Activated CD4-positive, alpha-beta memory T cell treated with anti-CD3 and anti-CD28 coated beads, Interleukin-2, amount 10 ng/mL, durations not matched to agents 7 days and 5 days (primary cell): ENCODE measurements at regions of chr14 and their contacts with region 1.

Region 1: DNA sequence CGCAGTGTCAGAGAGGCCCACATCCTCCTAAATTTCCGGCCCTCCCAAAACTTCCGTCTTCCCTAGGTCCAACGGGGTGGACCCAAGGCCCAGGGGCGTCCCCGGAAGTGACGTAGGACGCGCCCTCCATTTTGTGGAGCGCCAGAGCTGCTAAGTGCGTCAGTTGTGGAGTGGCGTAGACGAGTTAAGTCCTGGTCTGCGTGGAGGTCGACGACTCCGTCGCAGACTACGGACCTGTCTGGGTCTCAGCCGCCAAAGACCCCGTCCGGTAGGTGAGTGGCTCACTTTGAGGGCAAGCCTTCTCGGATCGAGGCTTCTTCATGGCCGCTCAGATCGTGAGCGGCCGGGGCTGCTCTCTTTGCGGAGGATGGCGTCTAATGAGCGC is at the start of gene SRSF5:
- DNase-seq: peak; percentile 95
- H3K4me3 Mint-ChIP-seq: peak within 1 kb of the TSS; percentile 93
- H3K27ac Mint-ChIP-seq: peak within 1 kb of the TSS; percentile 100
- H3K4me1 Mint-ChIP-seq: peaks cover 62% of the 10 kb centered on the region
- H3K27me3 Mint-ChIP-seq: no peaks in the 10 kb centered on the region
- total RNA-seq, gene SRSF5: 368 to 376 TPM

Region 2: DNA sequence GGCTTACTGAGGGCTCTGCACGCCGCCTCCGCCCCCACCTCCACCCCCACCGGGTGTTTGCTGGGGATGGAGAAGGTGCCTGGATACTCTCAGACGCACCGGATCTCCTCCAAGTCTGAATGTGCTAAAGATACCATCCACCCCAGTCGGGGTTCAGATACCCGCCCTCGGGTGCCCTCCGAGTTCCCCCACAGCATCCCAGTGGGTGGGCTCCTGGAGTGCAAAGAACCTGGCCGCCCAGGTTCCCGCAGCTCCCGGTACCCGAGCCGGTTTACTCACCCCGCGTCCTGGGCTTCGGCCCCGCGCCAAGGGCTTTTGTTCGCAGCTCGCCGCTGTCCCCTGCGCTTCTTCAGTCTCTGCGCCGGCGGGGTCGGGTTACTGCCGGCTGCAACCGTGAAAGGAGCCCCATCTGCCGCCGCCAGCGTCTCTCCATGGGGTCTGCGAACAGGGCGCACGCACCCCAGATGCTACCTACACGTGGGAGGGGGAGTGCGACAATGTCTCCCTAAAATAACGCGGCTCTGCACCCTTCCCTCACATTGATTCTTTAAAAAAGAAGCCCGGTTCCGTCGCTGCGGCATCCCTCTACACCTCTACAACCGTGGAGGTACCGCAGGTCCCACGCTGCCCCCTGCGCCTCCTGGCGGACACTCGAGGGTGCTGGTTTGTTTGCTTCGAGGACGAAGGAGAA is 192.6 kb before region 1 on chr14 and contains the start of gene CCDC177:
- CTCF ChIA-PET with region 1: no interaction called
- POLR2A ChIA-PET with region 1: interaction called, 11 read pairs
- DNase-seq: peak; percentile 77
- H3K4me3 Mint-ChIP-seq: peak within 1 kb of the TSS; percentile 62
- H3K27ac Mint-ChIP-seq: no peak within 1 kb of the TSS
- H3K4me1 Mint-ChIP-seq: peaks cover 10% of the 10 kb centered on the region
- H3K27me3 Mint-ChIP-seq: peaks cover 64% of the 10 kb centered on the region
- total RNA-seq, gene CCDC177: not detected

Region 3: GRCh38 chr14:69673578-69674305 is 93.2 kb before region 1 on chr14:
- CTCF ChIA-PET with region 1: no interaction called
- POLR2A ChIA-PET with region 1: interaction called, 13 read pairs
- DNase-seq: no peak
- H3K4me3 Mint-ChIP-seq: peak overlapping the region; percentile 31
- H3K27ac Mint-ChIP-seq: peak overlapping the region; percentile 95
- H3K4me1 Mint-ChIP-seq: peaks cover 89% of the 10 kb centered on the region
- H3K27me3 Mint-ChIP-seq: no peaks in the 10 kb centered on the region

Region 4: GRCh38 chr14:69695322-69696203 is 71.4 kb before region 1 on chr14:
- CTCF ChIA-PET with region 1: no interaction called
- POLR2A ChIA-PET with region 1: no interaction called
- DNase-seq: no peak
- H3K4me3 Mint-ChIP-seq: no peak overlapping the region
- H3K27ac Mint-ChIP-seq: peak overlapping the region; percentile 56
- H3K4me1 Mint-ChIP-seq: peaks cover 76% of the 10 kb centered on the region
- H3K27me3 Mint-ChIP-seq: no peaks in the 10 kb centered on the region

Region 5: DNA sequence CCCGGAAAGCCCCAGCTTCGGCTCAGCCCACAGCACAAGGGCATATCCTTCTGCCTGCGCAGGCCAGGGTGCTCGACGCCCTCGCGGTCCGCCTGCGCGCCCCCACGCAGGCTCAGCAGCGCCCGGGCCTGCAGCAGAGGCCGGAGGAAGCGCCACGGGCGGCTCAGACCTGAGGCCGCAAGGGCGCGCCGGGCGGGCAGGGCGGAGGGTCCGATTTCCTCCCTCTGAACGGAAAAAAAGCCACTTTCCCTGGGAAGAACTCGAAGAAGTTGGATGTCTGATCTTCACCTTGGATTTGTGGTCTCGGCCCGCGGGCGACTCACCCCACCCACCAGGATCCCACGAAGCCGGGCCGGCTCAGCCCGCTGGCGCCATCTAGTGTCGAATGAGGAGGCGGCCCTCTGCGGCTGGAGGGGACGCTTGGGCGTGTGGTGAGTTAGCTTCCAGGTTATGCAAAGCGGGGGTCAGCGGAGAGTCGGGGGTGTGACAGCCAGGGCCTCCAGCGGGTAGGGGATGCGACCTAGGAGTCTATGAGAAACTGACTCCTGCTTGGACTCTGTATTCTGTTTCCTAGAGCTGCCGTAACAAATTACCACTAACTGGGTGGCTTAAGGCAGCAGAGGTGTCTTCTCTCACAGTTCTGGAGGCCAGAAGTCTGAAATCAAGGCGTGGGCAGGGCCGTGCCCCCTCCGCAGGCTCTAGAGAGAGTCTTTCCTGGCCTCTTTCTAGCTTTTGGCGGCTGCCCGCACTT is 40.0 kb before region 1 on chr14:
- CTCF ChIA-PET with region 1: interaction called, 6 read pairs
- POLR2A ChIA-PET with region 1: interaction called, 21 read pairs
- DNase-seq: peak; percentile 84
- H3K4me3 Mint-ChIP-seq: peak overlapping the region; percentile 66
- H3K27ac Mint-ChIP-seq: peak overlapping the region; percentile 22
- H3K4me1 Mint-ChIP-seq: peaks cover 46% of the 10 kb centered on the region
- H3K27me3 Mint-ChIP-seq: no peaks in the 10 kb centered on the region

Region 6: GRCh38 chr14:69755784-69756183 is 11.2 kb before region 1 on chr14:
- CTCF ChIA-PET with region 1: interaction called, 3 read pairs
- POLR2A ChIA-PET with region 1: interaction called, 24 read pairs
- DNase-seq: no peak
- H3K4me3 Mint-ChIP-seq: no peak overlapping the region
- H3K27ac Mint-ChIP-seq: no peak overlapping the region
- H3K4me1 Mint-ChIP-seq: peaks cover 13% of the 10 kb centered on the region
- H3K27me3 Mint-ChIP-seq: no peaks in the 10 kb centered on the region

Region 7: DNA sequence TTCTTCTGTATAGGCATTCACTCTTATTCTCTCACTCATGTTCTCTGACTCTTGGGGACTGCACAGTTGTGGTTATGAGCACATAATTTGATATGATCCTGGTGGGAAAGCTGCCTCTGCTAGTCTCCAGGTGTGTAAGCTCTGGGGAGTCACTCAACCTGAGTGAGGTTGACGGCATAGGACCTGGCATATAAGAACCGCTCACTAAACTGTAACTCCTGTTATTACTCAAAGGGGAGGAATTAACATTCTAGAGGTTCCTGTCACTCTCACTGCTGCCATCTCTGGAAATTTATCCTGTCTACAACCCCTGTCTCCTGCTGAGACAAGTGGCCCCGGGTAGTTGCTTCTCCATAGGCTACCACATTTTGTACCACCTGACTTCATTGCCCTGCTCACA is 14.0 kb after region 1 on chr14:
- CTCF ChIA-PET with region 1: no interaction called
- POLR2A ChIA-PET with region 1: interaction called, 39 read pairs
- DNase-seq: no peak
- H3K4me3 Mint-ChIP-seq: no peak overlapping the region
- H3K27ac Mint-ChIP-seq: no peak overlapping the region
- H3K4me1 Mint-ChIP-seq: peaks cover 22% of the 10 kb centered on the region
- H3K27me3 Mint-ChIP-seq: no peaks in the 10 kb centered on the region